HEK293 (cell line): ENCODE measurements at regions of chr6 and their contacts with region 1.

Region 1: DNA sequence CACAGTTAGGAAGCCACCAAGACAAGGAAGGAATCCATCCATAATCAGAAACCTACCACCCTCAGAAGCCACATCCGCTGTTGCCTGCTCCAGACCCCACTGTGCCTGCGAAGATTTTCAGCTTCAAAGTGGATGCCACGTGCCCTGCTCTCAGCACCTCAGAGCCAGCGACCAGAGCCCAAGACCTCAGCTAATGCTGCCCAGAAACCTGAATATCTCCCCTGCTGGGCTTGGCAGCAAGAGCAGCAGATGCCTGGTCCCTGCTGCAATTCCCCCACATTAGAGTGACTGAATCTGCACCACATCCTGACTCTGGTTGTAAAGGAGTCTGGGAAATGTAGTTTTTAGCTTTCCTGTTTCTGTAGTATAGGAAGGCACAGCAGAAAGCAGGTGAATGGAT is 10.7 kb upstream of the ULBP3 start:
- H3K4me3 ChIP-seq: no peak overlapping the region
- H3K27ac ChIP-seq: peak overlapping the region; percentile 16; the same call in 1 of the 2 replicates
- H3K4me1 ChIP-seq: peaks cover 14% of the 10 kb centered on the region
- CTCF ChIP-seq: no peak; the same call in 1 of the 2 replicates

Region 2: GRCh38 chr6:150058231-150058792 is 21.3 kb before region 1 on chr6:
- CTCF ChIA-PET with region 1: no interaction called
- POLR2A ChIA-PET with region 1: no interaction called
- H3K4me3 ChIP-seq: no peak overlapping the region
- H3K27ac ChIP-seq: no peak overlapping the region
- H3K4me1 ChIP-seq: no peaks in the 10 kb centered on the region
- CTCF ChIP-seq: no peak

Region 3: DNA sequence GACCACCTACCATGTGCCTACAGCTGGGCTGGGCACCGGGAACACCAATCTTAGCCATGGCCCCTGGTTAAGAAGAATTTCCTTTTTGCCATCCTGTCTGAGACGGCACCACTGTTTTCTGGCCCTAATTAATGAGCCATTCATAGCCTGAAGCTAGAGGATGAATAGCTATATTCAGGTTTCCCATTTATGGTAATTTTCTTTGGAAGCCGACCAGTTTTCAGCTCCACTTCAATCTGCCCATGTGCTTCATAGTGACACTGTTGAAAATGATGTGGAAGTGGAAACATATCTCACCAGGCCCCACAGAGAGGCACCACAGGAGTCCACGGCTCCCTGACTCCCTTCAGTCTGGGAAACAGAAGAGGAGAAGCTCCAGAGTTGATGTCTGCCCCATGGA is 11.9 kb after region 1 on chr6:
- CTCF ChIA-PET with region 1: interaction called, 52 read pairs
- POLR2A ChIA-PET with region 1: interaction called, 3 read pairs
- H3K4me3 ChIP-seq: no peak overlapping the region
- H3K27ac ChIP-seq: no peak overlapping the region
- H3K4me1 ChIP-seq: no peaks in the 10 kb centered on the region
- CTCF ChIP-seq: no peak

Region 4: GRCh38 chr6:150134280-150134936 is 54.8 kb after region 1 on chr6:
- CTCF ChIA-PET with region 1: interaction called, 17 read pairs
- POLR2A ChIA-PET with region 1: no interaction called
- H3K4me3 ChIP-seq: no peak overlapping the region
- H3K27ac ChIP-seq: peak overlapping the region; percentile 74
- H3K4me1 ChIP-seq: peaks cover 26% of the 10 kb centered on the region
- CTCF ChIP-seq: no peak

Region 5: GRCh38 chr6:150211700-150212511 is 132.3 kb after region 1 on chr6:
- CTCF ChIA-PET with region 1: interaction called, 11 read pairs
- POLR2A ChIA-PET with region 1: no interaction called
- H3K4me3 ChIP-seq: no peak overlapping the region
- H3K27ac ChIP-seq: no peak overlapping the region
- H3K4me1 ChIP-seq: peaks cover 11% of the 10 kb centered on the region
- CTCF ChIP-seq: no peak

Region 6: DNA sequence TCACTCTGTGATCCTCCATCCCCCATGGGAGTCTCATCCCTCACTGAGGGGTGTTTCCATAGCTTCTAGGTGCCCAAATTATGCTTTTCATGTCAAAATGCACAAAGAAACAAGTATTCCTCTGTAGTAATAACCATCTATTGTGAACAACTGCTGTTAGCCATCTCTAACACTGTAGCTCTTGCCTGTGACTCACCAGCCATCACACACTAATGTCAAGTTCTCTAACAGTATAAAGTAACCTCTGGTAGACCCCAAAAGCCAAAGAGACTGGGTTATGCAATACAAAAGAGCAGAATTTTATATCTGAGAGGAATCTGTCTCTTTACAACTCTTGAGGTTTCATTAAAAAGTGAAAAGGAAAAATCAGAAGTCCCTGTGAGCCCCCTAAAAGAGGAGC is 263.8 kb after region 1 on chr6:
- CTCF ChIA-PET with region 1: interaction called, 24 read pairs
- POLR2A ChIA-PET with region 1: no interaction called
- H3K4me3 ChIP-seq: no peak overlapping the region
- H3K27ac ChIP-seq: no peak overlapping the region
- H3K4me1 ChIP-seq: no peaks in the 10 kb centered on the region; the same call in 1 of the 2 replicates
- CTCF ChIP-seq: no peak

Region 7: GRCh38 chr6:150403458-150404246 is 324.0 kb after region 1 on chr6:
- CTCF ChIA-PET with region 1: interaction called, 149 read pairs
- POLR2A ChIA-PET with region 1: no interaction called
- H3K4me3 ChIP-seq: no peak overlapping the region
- H3K27ac ChIP-seq: peak overlapping the region; percentile 44
- H3K4me1 ChIP-seq: peaks cover 13% of the 10 kb centered on the region
- CTCF ChIP-seq: no peak

Region 8: DNA sequence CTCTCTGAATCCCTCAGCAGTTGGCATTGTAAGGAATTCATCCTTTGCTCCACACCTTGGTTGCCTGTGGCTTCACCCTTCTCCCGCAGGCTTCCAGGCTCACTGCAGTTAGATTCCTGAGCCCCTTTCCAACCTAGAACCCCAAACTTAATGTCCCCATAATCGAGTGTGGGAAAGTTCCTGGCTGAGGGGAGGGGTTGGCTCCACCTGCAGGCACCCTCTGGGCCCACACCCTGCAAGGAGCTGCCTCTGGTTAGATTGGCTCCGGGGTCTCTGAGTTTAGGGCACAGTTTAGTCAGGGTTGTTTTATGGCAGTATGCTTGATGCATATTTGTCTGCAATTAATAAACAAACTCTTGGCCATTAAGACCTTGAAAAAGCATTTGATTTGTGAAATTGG is 849.3 kb after region 1 on chr6:
- CTCF ChIA-PET with region 1: interaction called, 12 read pairs
- POLR2A ChIA-PET with region 1: no interaction called
- H3K4me3 ChIP-seq: no peak overlapping the region
- H3K27ac ChIP-seq: no peak overlapping the region
- H3K4me1 ChIP-seq: no peaks in the 10 kb centered on the region
- CTCF ChIP-seq: 0 out of 2 replicates have a peak, but pooled peaks have one; percentile 16